MCF 10A (cell line): ENCODE measurements at regions of chr10 and their contacts with region 1.

Region 1: DNA sequence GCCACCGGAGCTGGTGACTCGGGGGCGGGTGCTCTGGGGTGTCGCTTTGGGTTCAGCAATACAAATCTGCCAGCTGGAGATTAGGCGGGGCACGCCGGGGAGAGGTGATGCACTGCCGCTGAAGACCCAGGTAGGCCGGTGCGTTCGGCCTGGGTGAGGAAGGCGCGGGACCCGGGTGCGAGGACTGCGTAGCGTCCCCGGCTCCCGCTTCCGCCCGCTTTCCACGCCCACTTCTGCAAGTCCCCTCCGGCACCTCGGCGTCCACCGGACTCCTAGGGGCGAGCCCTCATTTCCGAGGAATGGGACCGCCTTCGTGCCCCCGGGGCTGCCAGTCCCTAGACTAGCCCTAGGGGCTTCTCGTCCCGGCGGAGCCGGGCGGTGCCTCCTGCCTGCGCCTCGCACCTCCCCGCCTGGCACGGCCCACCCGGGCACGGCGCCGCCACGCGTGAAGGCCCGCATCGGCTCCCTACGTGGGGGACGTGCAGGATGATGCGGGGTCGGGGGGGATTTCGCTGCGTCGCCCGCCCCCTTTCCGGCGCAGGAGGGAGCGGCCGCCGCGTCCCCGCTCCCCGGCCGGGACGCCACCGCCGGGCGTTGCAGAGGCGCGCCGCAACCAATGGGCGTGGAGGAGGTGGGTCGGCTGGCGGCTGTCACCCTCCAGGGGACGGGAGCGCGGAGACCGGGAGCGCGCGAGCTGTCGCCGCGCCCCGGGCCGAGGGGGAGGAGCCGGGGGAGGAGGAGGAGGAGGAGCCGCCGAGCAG is 40.0 kb downstream of the HK1 start:
- DNase-seq: peak; percentile 88
- H3K4me3 Mint-ChIP-seq: peak overlapping the region; percentile 93
- H3K27ac Mint-ChIP-seq: peak overlapping the region; percentile 51
- H3K4me1 Mint-ChIP-seq: peaks cover 26% of the 10 kb centered on the region
- H3K27me3 Mint-ChIP-seq: no peaks in the 10 kb centered on the region
- CTCF ChIP-seq: no peak

Region 2: GRCh38 chr10:69232252-69232651 is 86.0 kb before region 1 on chr10:
- CTCF ChIA-PET with region 1: interaction called, 3 read pairs
- POLR2A ChIA-PET with region 1: interaction called, 11 read pairs
- intact Hi-C with region 1: loop called (anchors 2 kb)
- DNase-seq: peak; percentile 71
- H3K4me3 Mint-ChIP-seq: peak overlapping the region; percentile 0
- H3K27ac Mint-ChIP-seq: peak overlapping the region; percentile 21
- H3K4me1 Mint-ChIP-seq: peaks cover 15% of the 10 kb centered on the region
- H3K27me3 Mint-ChIP-seq: no peaks in the 10 kb centered on the region
- CTCF ChIP-seq: no peak

Region 3: DNA sequence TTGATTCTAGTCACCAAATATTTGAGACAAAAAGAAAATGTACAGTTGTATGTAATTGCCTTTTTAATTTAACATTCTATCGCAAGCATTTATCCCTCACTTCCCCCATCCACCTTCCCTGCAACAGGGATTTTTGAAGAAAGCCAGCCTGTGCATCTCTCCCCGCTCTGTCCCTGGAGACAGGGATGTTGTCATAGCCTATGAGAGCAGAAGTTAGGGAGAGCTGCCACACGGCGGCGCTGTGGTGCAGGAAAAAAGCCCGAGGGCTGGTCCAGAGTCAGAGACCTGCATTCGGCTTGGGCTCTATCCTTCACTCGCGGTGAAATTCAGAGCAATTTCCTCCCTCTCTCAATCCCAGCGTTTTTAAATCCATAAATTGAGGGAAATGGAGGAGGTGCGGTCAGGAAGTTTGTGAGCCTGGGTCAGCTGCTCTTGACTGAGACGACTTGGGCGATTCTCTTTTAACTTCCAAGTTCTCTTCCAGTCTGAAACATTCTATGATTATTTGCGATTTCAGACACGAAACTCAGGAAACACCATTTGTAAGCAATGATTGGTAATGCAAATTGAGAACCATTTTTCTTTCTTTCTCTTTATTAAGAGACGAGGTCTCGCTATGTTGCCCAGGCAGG is 80.6 kb before region 1 on chr10:
- CTCF ChIA-PET with region 1: interaction called, 4 read pairs
- POLR2A ChIA-PET with region 1: interaction called, 11 read pairs
- intact Hi-C with region 1: loop called (anchors 2 kb)
- DNase-seq: peak; percentile 83
- H3K4me3 Mint-ChIP-seq: no peak overlapping the region
- H3K27ac Mint-ChIP-seq: no peak overlapping the region
- H3K4me1 Mint-ChIP-seq: peaks cover 23% of the 10 kb centered on the region
- H3K27me3 Mint-ChIP-seq: no peaks in the 10 kb centered on the region
- CTCF ChIP-seq: peak; percentile 89

Region 4: DNA sequence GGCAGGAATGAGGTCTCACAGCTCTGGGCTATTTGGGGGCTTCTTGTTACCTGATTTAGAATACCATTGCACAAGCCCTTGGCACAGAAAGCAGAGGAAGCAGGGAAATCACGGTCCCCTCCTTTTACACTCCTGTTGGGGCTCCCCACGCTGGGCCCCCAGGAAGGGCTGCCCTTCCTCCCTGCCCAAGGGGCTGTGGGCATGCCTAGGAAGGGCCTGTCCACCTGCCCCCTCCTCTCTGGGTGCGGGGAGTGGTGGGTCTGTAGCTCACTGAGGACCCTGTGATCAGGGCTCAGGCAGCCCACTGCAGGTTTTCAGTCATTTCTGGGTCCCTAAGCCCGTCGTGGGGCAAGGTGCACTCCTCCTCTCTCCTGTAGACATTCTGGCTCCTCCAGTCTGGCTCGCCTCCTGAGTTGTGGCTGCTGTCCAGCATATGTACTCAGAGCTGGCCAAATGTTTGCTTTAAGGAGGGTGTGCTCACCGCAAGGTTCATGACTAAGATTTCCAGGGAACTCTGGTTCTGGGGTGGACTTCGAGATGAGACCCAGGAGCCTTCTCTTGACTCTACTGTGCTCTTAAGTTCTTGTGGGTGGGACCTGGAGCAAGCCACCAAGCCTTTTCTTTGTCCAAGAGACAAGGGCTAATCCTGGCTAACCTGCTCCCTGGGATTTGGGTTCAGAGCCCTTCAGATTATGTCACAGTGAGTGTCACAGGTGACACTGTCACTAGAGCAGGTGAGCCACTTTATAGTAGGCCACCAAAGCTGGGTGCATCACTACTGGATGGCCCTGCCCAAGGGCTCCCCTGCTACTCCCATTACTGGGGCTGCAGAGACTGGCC is 42.4 kb after region 1 on chr10:
- CTCF ChIA-PET with region 1: interaction called, 4 read pairs
- POLR2A ChIA-PET with region 1: interaction called, 44 read pairs
- intact Hi-C with region 1: loop called (anchors 5 kb)
- DNase-seq: peak; percentile 96
- H3K4me3 Mint-ChIP-seq: peak overlapping the region; percentile 49
- H3K27ac Mint-ChIP-seq: peak overlapping the region; percentile 87
- H3K4me1 Mint-ChIP-seq: peaks cover 52% of the 10 kb centered on the region
- H3K27me3 Mint-ChIP-seq: no peaks in the 10 kb centered on the region
- CTCF ChIP-seq: no peak

Region 5: DNA sequence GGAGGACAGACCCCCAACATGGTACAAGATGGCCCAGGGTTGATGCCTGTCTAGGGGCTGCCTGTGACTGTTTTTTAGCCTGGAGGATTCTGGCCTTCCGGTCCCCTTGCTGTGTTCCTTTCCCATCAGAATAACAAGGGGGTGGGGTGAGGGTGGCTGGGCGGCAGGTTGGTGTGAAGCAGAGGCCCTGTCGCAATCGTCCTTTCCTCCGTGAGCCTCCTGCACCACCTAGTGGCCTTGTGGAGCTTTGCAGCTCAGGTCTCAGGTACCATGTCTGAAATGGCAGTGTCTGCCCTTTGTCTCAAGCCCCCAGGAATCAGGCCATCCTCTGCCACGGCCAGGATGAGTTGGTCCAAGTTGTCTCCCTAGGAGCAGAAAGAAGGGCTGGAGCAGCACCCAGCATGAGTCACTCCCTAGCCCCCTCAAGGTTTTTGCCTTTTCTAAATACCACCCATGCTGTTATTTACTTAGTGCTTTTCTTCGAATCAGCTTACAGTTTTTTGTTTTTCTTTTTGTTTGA is 74.3 kb after region 1 on chr10:
- CTCF ChIA-PET with region 1: interaction called, 7 read pairs
- POLR2A ChIA-PET with region 1: interaction called, 9 read pairs
- intact Hi-C with region 1: loop called (anchors 1 kb)
- DNase-seq: peak; percentile 90
- H3K4me3 Mint-ChIP-seq: no peak overlapping the region
- H3K27ac Mint-ChIP-seq: peak overlapping the region; percentile 51
- H3K4me1 Mint-ChIP-seq: peaks cover 19% of the 10 kb centered on the region
- H3K27me3 Mint-ChIP-seq: no peaks in the 10 kb centered on the region
- CTCF ChIP-seq: peak; percentile 96